Activated CD4-positive, alpha-beta memory T cell treated with anti-CD3 and anti-CD28 coated beads for 36 hours (primary cell): ENCODE measurements at regions of chr1 and their contacts with region 1.

Region 1: GRCh38 chr1:240189386-240189989 is 97.8 kb downstream of the FMN2 start:
- DNase-seq: no peak
- H3K4me3 Mint-ChIP-seq: no peak overlapping the region
- H3K27ac Mint-ChIP-seq: no peak overlapping the region
- H3K4me1 Mint-ChIP-seq: peaks cover 4% of the 10 kb centered on the region
- H3K27me3 Mint-ChIP-seq: peaks cover 10% of the 10 kb centered on the region

Region 2: GRCh38 chr1:240027059-240027462 is 162.4 kb before region 1 on chr1:
- CTCF ChIA-PET with region 1: interaction called, 3 read pairs
- POLR2A ChIA-PET with region 1: no interaction called
- intact Hi-C with region 1: loop called (anchors 1 kb)
- DNase-seq: peak; percentile 35
- H3K4me3 Mint-ChIP-seq: no peak overlapping the region
- H3K27ac Mint-ChIP-seq: no peak overlapping the region
- H3K4me1 Mint-ChIP-seq: no peaks in the 10 kb centered on the region
- H3K27me3 Mint-ChIP-seq: peaks cover 4% of the 10 kb centered on the region

Region 3: GRCh38 chr1:240149484-240150094 is 39.9 kb before region 1 on chr1:
- CTCF ChIA-PET with region 1: interaction called, 12 read pairs
- POLR2A ChIA-PET with region 1: no interaction called
- intact Hi-C with region 1: no loop called
- DNase-seq: no peak
- H3K4me3 Mint-ChIP-seq: no peak overlapping the region
- H3K27ac Mint-ChIP-seq: no peak overlapping the region
- H3K4me1 Mint-ChIP-seq: no peaks in the 10 kb centered on the region
- H3K27me3 Mint-ChIP-seq: peaks cover 3% of the 10 kb centered on the region

Region 4: DNA sequence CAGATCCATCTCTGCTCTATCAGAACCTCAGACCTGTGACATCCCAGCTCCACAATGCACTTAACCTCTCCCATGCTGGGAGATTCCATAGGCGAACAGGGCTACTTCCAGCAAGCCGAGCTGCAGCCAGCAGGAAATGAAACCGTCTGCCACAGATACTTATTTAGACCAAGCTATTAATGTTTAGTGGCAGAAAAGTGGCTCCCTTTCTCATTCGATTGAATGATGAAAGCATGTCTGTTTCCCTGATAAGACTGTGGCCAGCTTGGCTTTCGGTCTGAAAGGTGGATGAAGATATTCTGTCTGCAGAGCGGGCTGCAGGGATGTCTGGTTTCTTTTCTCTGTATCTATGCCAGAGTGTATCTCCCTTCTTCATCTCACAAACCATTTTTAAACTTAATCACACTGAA is 276.0 kb after region 1 on chr1:
- CTCF ChIA-PET with region 1: no interaction called
- POLR2A ChIA-PET with region 1: no interaction called
- intact Hi-C with region 1: loop called (anchors 10 kb)
- DNase-seq: no peak
- H3K4me3 Mint-ChIP-seq: no peak overlapping the region
- H3K27ac Mint-ChIP-seq: no peak overlapping the region
- H3K4me1 Mint-ChIP-seq: peaks cover 8% of the 10 kb centered on the region
- H3K27me3 Mint-ChIP-seq: no peaks in the 10 kb centered on the region

Region 5: GRCh38 chr1:240611619-240612480 is 422.4 kb after region 1 on chr1 and contains the start of gene GREM2:
- CTCF ChIA-PET with region 1: interaction called, 4 read pairs
- POLR2A ChIA-PET with region 1: no interaction called
- intact Hi-C with region 1: loop called (anchors 2 kb)
- DNase-seq: peak; percentile 73
- H3K4me3 Mint-ChIP-seq: peak within 1 kb of the TSS; percentile 79
- H3K27ac Mint-ChIP-seq: peak within 1 kb of the TSS; percentile 5
- H3K4me1 Mint-ChIP-seq: peaks cover 32% of the 10 kb centered on the region
- H3K27me3 Mint-ChIP-seq: peaks cover 29% of the 10 kb centered on the region
- total RNA-seq, gene GREM2: 0.26 to 0.46 TPM

Region 6: DNA sequence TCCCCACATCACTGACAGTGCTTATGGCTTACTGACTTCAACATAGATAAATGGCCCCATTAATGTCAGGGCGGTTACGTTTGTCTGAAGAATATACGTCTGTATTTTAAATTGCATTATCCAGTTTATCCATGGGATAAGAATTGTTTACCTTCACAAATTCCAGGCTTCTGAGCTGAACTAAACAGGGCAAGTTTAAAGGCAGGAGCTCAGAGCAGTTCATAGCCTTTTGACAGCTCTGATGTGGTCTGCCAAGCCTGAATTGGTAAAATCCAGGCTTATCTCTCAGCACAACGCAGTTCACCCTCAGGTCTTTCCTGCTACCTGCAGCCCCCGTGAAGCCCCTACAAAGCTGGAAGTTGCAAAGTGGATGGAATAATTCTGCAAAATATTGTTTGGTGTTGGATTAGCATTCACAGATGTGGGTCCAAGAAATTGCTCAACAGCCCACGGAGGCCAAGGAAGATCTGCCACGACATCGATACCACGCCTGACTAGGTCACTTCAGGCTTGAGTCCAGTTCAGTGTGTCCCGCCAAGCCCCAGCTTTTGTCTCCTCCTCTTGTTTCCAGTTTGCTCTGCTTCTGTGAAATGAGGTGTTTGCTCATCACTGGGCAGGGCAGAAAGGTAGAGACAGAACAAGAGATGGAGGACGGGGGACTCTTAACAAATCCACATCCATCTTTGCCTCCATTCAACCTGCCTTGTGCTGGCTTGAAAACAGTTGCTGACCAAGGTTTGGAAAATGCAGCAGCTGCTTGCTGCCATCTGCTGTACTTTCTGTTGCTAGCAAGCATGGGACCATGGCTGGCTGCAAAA is 502.2 kb after region 1 on chr1:
- CTCF ChIA-PET with region 1: interaction called, 8 read pairs
- POLR2A ChIA-PET with region 1: no interaction called
- intact Hi-C with region 1: loop called (anchors 5 kb)
- DNase-seq: peak; percentile 24
- H3K4me3 Mint-ChIP-seq: no peak overlapping the region
- H3K27ac Mint-ChIP-seq: no peak overlapping the region
- H3K4me1 Mint-ChIP-seq: peaks cover 13% of the 10 kb centered on the region
- H3K27me3 Mint-ChIP-seq: peaks cover 1% of the 10 kb centered on the region

Region 7: DNA sequence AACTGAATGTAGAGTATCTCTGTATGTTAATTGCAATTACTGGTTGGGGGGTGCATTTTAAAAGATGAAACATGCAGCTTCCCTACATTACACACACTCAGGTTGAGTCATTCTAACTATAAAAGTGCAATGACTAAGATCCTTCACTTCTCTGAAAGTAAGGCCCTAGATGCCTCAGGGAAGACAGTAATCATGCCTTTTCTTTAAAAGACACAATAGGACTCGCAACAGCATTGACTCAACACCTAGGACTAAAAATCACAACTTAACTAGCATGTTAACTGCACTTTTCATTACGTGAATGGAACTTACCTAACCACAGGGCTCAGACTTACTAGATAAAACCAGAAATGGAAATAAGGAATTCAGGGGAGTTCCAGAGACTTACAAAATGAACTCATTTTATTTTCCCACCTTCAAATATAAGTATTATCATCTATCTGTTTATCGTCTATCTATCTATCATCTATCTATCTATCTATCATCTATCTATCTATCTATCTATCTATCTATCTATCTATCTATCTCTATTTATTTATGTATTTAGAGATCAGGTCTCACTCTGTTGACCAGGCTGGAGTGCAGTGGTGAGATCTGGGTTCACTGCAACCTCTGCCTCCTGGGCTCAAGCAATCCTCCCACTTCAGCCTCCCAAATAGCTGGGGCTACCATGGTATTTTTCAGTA is 1402.9 kb after region 1 on chr1:
- CTCF ChIA-PET with region 1: no interaction called
- POLR2A ChIA-PET with region 1: no interaction called
- intact Hi-C with region 1: loop called (anchors 5 kb)
- DNase-seq: no peak
- H3K4me3 Mint-ChIP-seq: no peak overlapping the region
- H3K27ac Mint-ChIP-seq: peak overlapping the region; percentile 49
- H3K4me1 Mint-ChIP-seq: peaks cover 27% of the 10 kb centered on the region
- H3K27me3 Mint-ChIP-seq: no peaks in the 10 kb centered on the region